Panc1 (cell line): ENCODE measurements at regions of chr17 and their contacts with region 1.

Region 1: GRCh38 chr17:30236766-30237165 is 1.3 kb upstream of the SLC6A4 start:
- DNase-seq: no peak
- ATAC-seq: peak; percentile 88
- H3K4me3 ChIP-seq: no peak overlapping the region
- H3K27ac ChIP-seq: no peak overlapping the region
- H3K4me1 ChIP-seq: peaks cover 20% of the 10 kb centered on the region
- H3K27me3 ChIP-seq: peaks cover 17% of the 10 kb centered on the region
- CTCF ChIP-seq: peak; percentile 76

Region 2: DNA sequence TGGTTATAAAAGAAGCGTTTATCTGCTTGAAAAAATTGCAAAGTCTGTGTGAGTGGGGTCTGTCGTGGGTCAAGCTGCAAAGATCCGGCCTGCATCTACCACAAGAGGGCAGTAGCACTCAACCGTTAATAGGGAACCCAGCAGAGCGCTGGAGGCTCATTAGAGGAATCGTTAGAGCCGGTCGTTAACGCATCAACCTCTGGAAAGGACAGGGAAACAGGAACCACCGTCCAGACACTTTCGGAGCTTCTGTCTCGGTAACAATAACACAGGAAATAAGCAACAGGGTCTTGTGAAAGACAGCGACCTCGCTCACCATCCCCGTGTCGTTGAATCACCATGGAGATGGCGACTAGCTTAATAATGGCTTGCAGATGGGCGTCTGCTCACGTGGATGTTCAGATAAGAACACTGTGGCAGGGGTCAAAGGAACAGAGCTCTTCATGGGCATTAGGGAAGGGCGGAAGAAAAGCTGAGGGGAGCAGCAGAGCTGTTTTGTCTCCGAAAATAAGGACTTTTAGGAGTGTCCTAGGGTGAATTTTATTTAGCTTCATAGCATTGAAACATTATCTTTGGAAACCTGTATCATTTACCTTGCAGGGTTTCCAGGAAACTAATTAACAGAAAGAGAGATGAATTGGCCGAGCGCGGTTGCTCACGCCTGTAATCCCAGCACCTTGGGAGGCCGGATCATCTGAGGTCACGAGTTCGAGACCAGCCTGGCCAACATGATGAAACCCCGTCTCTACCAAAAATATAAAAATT is 132.0 kb before region 1 on chr17:
- CTCF ChIA-PET with region 1: interaction called, 32 read pairs
- POLR2A ChIA-PET with region 1: no interaction called
- in situ Hi-C with region 1: no loop called
- intact Hi-C with region 1: loop called (anchors 5 kb)
- DNase-seq: peak; percentile 73
- ATAC-seq: peak; percentile 98
- H3K4me3 ChIP-seq: peak overlapping the region; percentile 46 to 77
- H3K27ac ChIP-seq: peak overlapping the region; percentile 79
- H3K4me1 ChIP-seq: 0 out of 2 replicates have a peak, but pooled peaks cover 3% of the 10 kb centered on the region
- H3K27me3 ChIP-seq: no peaks in the 10 kb centered on the region
- CTCF ChIP-seq: peak; percentile 92

Region 3: DNA sequence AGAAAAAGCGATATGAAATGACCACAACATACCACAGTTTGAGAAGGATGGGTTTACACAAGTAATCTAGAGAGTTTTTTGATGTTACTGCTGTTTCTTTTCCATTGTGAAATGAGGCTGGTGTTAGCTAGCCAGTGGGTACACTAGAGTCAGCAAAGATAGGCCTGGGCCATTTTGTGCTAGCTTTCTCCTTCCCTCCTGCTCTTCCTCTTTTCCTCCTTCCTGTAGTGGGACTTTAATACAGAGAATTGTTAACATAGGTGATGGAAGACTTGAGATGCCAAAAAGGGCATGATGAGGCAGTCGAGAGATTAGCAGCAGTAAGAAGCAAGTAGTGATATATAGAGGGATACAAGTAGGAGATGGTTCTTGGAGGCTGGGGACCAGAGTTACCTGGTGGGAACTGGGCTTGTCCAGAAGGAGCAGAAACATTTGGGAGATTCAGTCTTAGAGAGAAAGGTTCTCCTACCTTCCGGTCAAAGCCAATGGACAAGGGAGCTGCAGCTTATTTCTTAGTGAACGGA is 112.4 kb before region 1 on chr17:
- CTCF ChIA-PET with region 1: interaction called, 4 read pairs
- POLR2A ChIA-PET with region 1: interaction called, 3 read pairs
- in situ Hi-C with region 1: no loop called
- intact Hi-C with region 1: loop called (anchors 5 kb)
- DNase-seq: no peak
- ATAC-seq: no peak
- H3K4me3 ChIP-seq: no peak overlapping the region
- H3K27ac ChIP-seq: no peak overlapping the region
- H3K4me1 ChIP-seq: peaks cover 4% of the 10 kb centered on the region; the same call in 1 of the 2 replicates
- H3K27me3 ChIP-seq: no peaks in the 10 kb centered on the region
- CTCF ChIP-seq: no peak

Region 4: GRCh38 chr17:30263552-30264333 is 27.0 kb after region 1 on chr17:
- CTCF ChIA-PET with region 1: no interaction called
- POLR2A ChIA-PET with region 1: no interaction called
- in situ Hi-C with region 1: no loop called
- intact Hi-C with region 1: loop called (anchors 2 kb)
- DNase-seq: no peak
- ATAC-seq: no peak
- H3K4me3 ChIP-seq: no peak overlapping the region
- H3K27ac ChIP-seq: no peak overlapping the region
- H3K4me1 ChIP-seq: no peaks in the 10 kb centered on the region
- H3K27me3 ChIP-seq: no peaks in the 10 kb centered on the region
- CTCF ChIP-seq: no peak

Region 5: DNA sequence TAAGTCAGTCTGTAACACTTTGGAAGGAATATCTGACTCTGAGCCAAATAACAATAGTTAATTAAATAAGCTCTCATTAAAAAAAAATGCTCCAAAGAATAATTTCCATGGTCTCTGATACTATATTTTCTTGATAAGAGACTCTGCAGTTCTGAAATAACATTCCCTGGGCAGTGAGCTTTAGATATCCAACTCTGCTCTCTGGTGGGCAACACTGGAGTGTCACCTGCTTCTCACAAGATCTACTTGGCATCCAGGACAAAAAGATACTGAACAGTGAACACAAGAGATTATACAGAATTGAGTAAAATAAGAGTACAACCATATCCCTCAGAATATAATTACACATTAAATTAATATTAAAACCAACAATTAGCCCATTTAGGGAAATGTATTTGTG is 41.3 kb after region 1 on chr17:
- CTCF ChIA-PET with region 1: interaction called, 13 read pairs
- POLR2A ChIA-PET with region 1: no interaction called
- in situ Hi-C with region 1: no loop called
- intact Hi-C with region 1: no loop called
- DNase-seq: no peak
- ATAC-seq: no peak
- H3K4me3 ChIP-seq: no peak overlapping the region
- H3K27ac ChIP-seq: no peak overlapping the region
- H3K4me1 ChIP-seq: no peaks in the 10 kb centered on the region
- H3K27me3 ChIP-seq: no peaks in the 10 kb centered on the region
- CTCF ChIP-seq: peak; percentile 31; the same call in 1 of the 2 replicates

Region 6: GRCh38 chr17:30336369-30337171 is 99.8 kb after region 1 on chr17:
- CTCF ChIA-PET with region 1: no interaction called
- POLR2A ChIA-PET with region 1: no interaction called
- in situ Hi-C with region 1: no loop called
- intact Hi-C with region 1: no loop called
- DNase-seq: peak; percentile 61
- ATAC-seq: peak; percentile 86
- H3K4me3 ChIP-seq: no peak overlapping the region
- H3K27ac ChIP-seq: no peak overlapping the region
- H3K4me1 ChIP-seq: 0 out of 2 replicates have a peak, but pooled peaks cover 4% of the 10 kb centered on the region
- H3K27me3 ChIP-seq: no peaks in the 10 kb centered on the region
- CTCF ChIP-seq: peak; percentile 86